Naive thymus-derived CD4-positive, alpha-beta T cell (primary cell): ENCODE measurements at regions of chr2 and their contacts with region 1.

Region 1: DNA sequence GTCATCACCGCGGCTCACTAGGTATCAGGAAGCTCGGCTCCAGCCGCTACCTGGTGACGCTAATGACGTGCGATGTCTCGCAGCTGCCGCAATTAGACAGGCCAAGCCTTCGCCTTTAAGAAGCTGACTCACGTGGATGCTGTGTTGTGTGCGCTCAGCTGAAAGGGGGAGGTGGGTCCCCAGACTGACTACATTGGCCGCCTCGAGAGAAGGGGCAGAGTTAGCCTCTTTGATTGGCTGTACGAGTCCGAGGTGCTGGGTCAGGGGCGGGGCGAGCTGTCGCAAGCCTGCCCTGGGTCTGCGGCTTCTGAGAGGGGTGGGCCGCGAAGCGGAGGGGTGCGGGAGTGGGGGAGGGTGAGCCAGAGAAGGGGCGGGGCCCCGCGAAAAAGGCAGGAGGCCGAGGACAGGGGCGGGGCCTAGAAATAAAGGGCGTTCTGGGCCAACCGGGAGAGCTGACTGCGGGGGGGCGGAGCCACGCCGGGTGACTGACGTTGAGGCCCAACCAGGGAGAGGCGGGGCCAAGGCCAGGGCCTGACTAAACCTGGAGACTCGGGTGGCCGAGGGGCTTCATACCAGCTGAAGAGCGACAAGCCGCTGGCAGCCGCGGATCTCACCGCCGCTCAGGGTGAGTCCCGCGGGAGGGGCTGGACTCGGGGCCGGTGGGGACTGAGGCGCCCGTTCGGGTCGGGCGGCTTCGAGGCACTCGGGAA is at the start of gene YPEL5:
- DNase-seq: peak; percentile 98 to 100 (median 100)
- ATAC-seq: peak; percentile 88
- H3K4me3 ChIP-seq: peak within 1 kb of the TSS; percentile 74
- H3K4me3 Mint-ChIP-seq: peak within 1 kb of the TSS; percentile 83 to 93 (median 88)
- H3K27ac ChIP-seq: peak within 1 kb of the TSS; percentile 100
- H3K27ac Mint-ChIP-seq: peak within 1 kb of the TSS; percentile 99 to 100 (median 99)
- H3K4me1 ChIP-seq: peaks cover 31 to 40% of the 10 kb centered on the region in 2 donors
- H3K4me1 Mint-ChIP-seq: peaks cover 38 to 75% (median 56%) of the 10 kb centered on the region in 7 donors
- H3K27me3 ChIP-seq: no peaks in the 10 kb centered on the region
- H3K27me3 Mint-ChIP-seq: no peaks in the 10 kb centered on the region
- total RNA-seq, gene YPEL5: 30.9 to 1,022 (median 98.3) TPM

Region 2: DNA sequence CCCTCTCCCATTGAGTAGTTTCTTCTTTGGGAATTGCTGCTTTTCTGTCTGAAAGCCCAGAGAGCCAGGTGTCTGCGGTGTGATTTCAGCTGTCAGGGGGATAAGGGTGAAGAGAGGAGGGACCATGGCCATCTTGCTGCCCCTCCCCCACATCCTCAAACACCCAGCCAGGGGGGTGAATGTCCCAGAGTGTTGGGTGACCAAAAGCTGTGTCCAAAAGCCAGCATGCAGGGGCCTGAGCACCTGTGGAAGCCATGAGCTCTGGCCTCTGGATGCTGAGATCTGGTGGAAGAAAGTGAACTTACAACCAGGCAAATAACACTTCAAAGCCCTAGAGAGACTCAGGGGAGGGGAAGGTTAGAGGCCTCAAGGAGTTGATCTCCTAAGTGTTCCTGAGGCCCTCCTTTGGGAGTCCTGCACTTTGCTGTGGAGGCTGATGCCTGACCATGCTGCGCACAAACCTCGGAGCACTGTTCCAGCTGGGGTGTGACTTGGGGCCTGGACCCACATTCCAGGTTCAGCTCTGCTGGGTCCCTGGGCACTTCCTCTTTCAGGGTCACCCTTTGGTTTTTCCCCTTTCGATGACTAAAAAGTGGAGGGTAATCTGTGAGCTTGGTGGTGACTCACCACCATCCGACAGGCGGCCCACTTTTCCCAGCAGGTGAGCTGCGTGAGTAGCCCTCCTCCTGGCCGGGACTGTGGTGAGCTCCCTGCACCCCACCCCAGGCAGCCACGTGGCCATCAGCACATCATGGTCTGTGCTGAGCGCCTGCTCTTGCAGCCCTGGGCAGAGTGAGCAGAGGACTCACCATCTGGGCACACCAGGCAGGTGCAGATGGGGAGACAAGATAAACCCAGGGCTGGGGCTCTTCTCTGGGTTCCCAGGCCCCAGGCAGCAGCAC is 1820.8 kb before region 1 on chr2:
- CTCF ChIA-PET with region 1: no interaction called
- POLR2A ChIA-PET with region 1: no interaction called
- intact Hi-C with region 1: no loop called
- DNase-seq: no peak
- ATAC-seq: peak; percentile 52
- H3K4me3 ChIP-seq: no peak overlapping the region
- H3K4me3 Mint-ChIP-seq: no peak overlapping the region
- H3K27ac ChIP-seq: no peak overlapping the region
- H3K27ac Mint-ChIP-seq: no peak overlapping the region
- H3K4me1 ChIP-seq: no peaks in the 10 kb centered on the region
- H3K4me1 Mint-ChIP-seq: peaks cover 0 to 8% (median 0%) of the 10 kb centered on the region in 7 donors
- H3K27me3 ChIP-seq: no peaks in the 10 kb centered on the region
- H3K27me3 Mint-ChIP-seq: no peaks in the 10 kb centered on the region

Region 3: GRCh38 chr2:28621172-28622100 is 1525.2 kb before region 1 on chr2:
- CTCF ChIA-PET with region 1: no interaction called
- POLR2A ChIA-PET with region 1: no interaction called
- intact Hi-C with region 1: loop called in 1 of 2 experiments (anchors 10 kb)
- DNase-seq: peak; percentile 44 to 96 (median 93)
- ATAC-seq: peak; percentile 94
- H3K4me3 ChIP-seq: peak overlapping the region; percentile 40
- H3K4me3 Mint-ChIP-seq: peak overlapping the region in 9 of 10 donors; percentile 71 to 86 (median 80)
- H3K27ac ChIP-seq: peak overlapping the region; percentile 95
- H3K27ac Mint-ChIP-seq: peak overlapping the region in 5 of 9 donors; percentile 93 to 100 (median 100)
- H3K4me1 ChIP-seq: peaks cover 43 to 86% of the 10 kb centered on the region in 2 donors
- H3K4me1 Mint-ChIP-seq: peaks cover 0 to 96% (median 59%) of the 10 kb centered on the region in 7 donors
- H3K27me3 ChIP-seq: no peaks in the 10 kb centered on the region
- H3K27me3 Mint-ChIP-seq: no peaks in the 10 kb centered on the region

Region 4: GRCh38 chr2:28944535-28945248 is 1201.9 kb before region 1 on chr2:
- CTCF ChIA-PET with region 1: no interaction called
- POLR2A ChIA-PET with region 1: no interaction called
- intact Hi-C with region 1: no loop called
- DNase-seq: no peak
- ATAC-seq: no peak
- H3K4me3 ChIP-seq: no peak overlapping the region
- H3K4me3 Mint-ChIP-seq: no peak overlapping the region
- H3K27ac ChIP-seq: no peak overlapping the region
- H3K27ac Mint-ChIP-seq: peak overlapping the region in 1 of 9 donors; percentile 70
- H3K4me1 ChIP-seq: no peaks in the 10 kb centered on the region
- H3K4me1 Mint-ChIP-seq: peaks cover 0 to 5% (median 0%) of the 10 kb centered on the region in 7 donors
- H3K27me3 ChIP-seq: no peaks in the 10 kb centered on the region
- H3K27me3 Mint-ChIP-seq: no peaks in the 10 kb centered on the region

Region 5: GRCh38 chr2:29014811-29015421 is 1131.7 kb before region 1 on chr2:
- CTCF ChIA-PET with region 1: no interaction called
- POLR2A ChIA-PET with region 1: no interaction called
- intact Hi-C with region 1: loop called (anchors 1 to 2 kb)
- DNase-seq: peak in 8 of 9 donors; percentile 33 to 75 (median 70)
- ATAC-seq: peak; percentile 75
- H3K4me3 ChIP-seq: peak overlapping the region; percentile 27
- H3K4me3 Mint-ChIP-seq: peak overlapping the region; percentile 74 to 94 (median 84)
- H3K27ac ChIP-seq: peak overlapping the region; percentile 77
- H3K27ac Mint-ChIP-seq: peak overlapping the region; percentile 94 to 100 (median 99)
- H3K4me1 ChIP-seq: peaks cover 72 to 83% of the 10 kb centered on the region in 2 donors
- H3K4me1 Mint-ChIP-seq: peaks cover 62 to 73% (median 72%) of the 10 kb centered on the region in 7 donors
- H3K27me3 ChIP-seq: no peaks in the 10 kb centered on the region
- H3K27me3 Mint-ChIP-seq: no peaks in the 10 kb centered on the region

Region 6: DNA sequence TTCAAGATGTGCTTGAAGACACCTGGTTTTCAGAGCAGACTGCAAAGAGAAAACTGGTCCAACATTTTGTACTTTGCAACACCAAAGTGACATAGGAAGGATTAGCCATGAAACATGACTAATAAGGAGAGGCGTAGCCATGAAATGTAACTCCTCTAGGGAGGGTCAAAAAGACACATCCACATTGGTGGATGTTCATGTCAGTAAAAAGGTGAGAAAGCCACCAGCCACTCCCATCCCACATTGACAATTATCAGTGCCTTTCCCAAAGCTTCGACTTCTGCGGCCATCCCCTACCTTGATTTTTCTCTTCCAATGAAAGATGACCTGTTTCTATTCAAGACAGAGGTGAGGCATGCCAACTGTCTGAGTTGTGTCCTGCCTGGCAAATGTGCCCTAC is 448.4 kb before region 1 on chr2:
- CTCF ChIA-PET with region 1: no interaction called
- POLR2A ChIA-PET with region 1: no interaction called
- intact Hi-C with region 1: no loop called
- DNase-seq: no peak
- ATAC-seq: no peak
- H3K4me3 ChIP-seq: no peak overlapping the region
- H3K4me3 Mint-ChIP-seq: no peak overlapping the region
- H3K27ac ChIP-seq: no peak overlapping the region
- H3K27ac Mint-ChIP-seq: no peak overlapping the region
- H3K4me1 ChIP-seq: no peaks in the 10 kb centered on the region
- H3K4me1 Mint-ChIP-seq: peaks cover 0 to 2% (median 0%) of the 10 kb centered on the region in 7 donors
- H3K27me3 ChIP-seq: no peaks in the 10 kb centered on the region
- H3K27me3 Mint-ChIP-seq: peaks cover 0 to 17% (median 9%) of the 10 kb centered on the region in 5 donors

Region 7: GRCh38 chr2:30208452-30208851 is 61.9 kb after region 1 on chr2:
- CTCF ChIA-PET with region 1: interaction called, 10 read pairs
- POLR2A ChIA-PET with region 1: interaction called, 10 read pairs
- intact Hi-C with region 1: no loop called
- DNase-seq: peak in 4 of 9 donors; percentile 19 to 42 (median 28)
- ATAC-seq: peak; percentile 69
- H3K4me3 ChIP-seq: peak overlapping the region; percentile 3
- H3K4me3 Mint-ChIP-seq: peak overlapping the region; percentile 14 to 80 (median 68)
- H3K27ac ChIP-seq: peak overlapping the region; percentile 25
- H3K27ac Mint-ChIP-seq: peak overlapping the region in 8 of 9 donors; percentile 82 to 95 (median 88)
- H3K4me1 ChIP-seq: peaks cover 8 to 33% of the 10 kb centered on the region in 2 donors
- H3K4me1 Mint-ChIP-seq: peaks cover 14 to 44% (median 35%) of the 10 kb centered on the region in 7 donors
- H3K27me3 ChIP-seq: no peaks in the 10 kb centered on the region
- H3K27me3 Mint-ChIP-seq: peaks cover 0 to 7% (median 0%) of the 10 kb centered on the region in 5 donors

Region 8: DNA sequence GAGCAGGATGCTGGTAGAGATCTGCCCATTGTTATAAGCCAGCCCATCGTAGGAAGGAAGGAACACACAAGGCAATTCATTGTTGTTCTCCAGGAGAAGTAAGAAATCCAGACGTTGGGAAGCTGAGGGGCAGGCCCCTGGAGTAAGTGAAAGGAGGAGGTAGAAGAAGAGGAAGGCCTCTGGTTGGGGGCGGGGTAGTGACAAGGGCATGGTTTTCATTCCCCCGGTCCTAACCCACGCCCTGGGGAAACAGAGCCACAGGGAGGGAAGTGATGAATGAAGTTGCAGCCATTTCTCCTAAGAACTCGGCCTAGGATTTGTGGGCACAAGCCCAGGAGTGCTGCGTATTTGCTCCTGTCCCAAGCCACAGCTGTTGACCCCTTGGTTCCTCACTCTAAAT is 102.8 kb after region 1 on chr2:
- CTCF ChIA-PET with region 1: no interaction called
- POLR2A ChIA-PET with region 1: no interaction called
- intact Hi-C with region 1: no loop called
- DNase-seq: no peak
- ATAC-seq: no peak
- H3K4me3 ChIP-seq: no peak overlapping the region
- H3K4me3 Mint-ChIP-seq: peak overlapping the region in 9 of 10 donors; percentile 29 to 77 (median 59)
- H3K27ac ChIP-seq: peak overlapping the region; percentile 56
- H3K27ac Mint-ChIP-seq: peak overlapping the region in 8 of 9 donors; percentile 83 to 100 (median 89)
- H3K4me1 ChIP-seq: peaks cover 70 to 88% of the 10 kb centered on the region in 2 donors
- H3K4me1 Mint-ChIP-seq: peaks cover 61 to 99% (median 96%) of the 10 kb centered on the region in 7 donors
- H3K27me3 ChIP-seq: no peaks in the 10 kb centered on the region
- H3K27me3 Mint-ChIP-seq: no peaks in the 10 kb centered on the region

Region 9: GRCh38 chr2:30266051-30266621 is 119.5 kb after region 1 on chr2:
- CTCF ChIA-PET with region 1: no interaction called
- POLR2A ChIA-PET with region 1: interaction called, 3 read pairs
- intact Hi-C with region 1: loop called in 1 of 2 experiments (anchors 2 kb)
- DNase-seq: peak; percentile 25 to 80 (median 75)
- ATAC-seq: peak; percentile 95
- H3K4me3 ChIP-seq: peak overlapping the region; percentile 44
- H3K4me3 Mint-ChIP-seq: peak overlapping the region; percentile 68 to 92 (median 84)
- H3K27ac ChIP-seq: peak overlapping the region; percentile 82
- H3K27ac Mint-ChIP-seq: peak overlapping the region; percentile 89 to 100 (median 97)
- H3K4me1 ChIP-seq: peaks cover 46 to 65% of the 10 kb centered on the region in 2 donors
- H3K4me1 Mint-ChIP-seq: peaks cover 44 to 94% (median 86%) of the 10 kb centered on the region in 7 donors
- H3K27me3 ChIP-seq: no peaks in the 10 kb centered on the region
- H3K27me3 Mint-ChIP-seq: no peaks in the 10 kb centered on the region

Region 10: DNA sequence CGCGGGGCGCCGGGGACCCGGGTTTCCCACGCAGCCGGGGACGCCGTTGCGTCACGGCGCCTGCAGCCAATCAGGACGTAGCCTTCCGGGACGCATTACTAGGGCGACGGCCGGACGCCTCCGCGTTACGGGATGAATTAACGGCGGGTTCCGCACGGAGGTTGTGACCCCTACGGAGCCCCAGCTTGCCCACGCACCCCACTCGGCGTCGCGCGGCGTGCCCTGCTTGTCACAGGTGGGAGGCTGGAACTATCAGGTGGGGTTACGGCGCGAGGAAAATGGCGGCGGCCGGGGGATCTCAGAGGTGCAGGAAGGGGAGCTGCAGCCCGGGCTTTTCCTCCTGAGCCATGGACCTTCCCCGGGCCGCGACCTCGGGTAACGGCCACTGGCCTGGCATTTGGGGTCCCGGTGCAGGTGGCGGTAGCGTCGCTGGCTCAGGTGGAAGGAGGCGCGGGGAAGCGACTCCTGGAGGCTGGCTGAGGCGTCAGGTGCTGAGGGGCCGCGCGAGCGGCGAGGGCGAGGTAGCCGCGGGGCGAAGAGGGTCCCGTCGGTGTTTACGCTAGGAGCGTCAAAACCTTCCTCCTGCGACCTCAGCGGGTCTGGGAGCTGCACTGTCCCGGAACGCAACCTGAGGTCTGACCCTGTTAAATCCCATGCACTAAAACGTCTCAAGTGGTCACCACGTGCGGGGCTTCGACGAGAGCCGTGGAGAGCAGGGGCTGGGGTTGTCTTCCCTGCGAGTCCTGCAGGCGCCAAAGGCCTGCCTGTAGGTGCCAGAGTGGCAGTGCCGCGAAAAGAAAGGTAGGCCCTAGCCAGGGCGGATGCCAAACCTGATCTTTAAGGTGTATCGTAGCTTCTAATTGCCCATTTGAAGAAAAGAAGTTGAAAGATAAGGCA is 300.8 kb after region 1 on chr2 and contains the start of gene LCLAT1:
- CTCF ChIA-PET with region 1: no interaction called
- POLR2A ChIA-PET with region 1: interaction called, 4 read pairs
- intact Hi-C with region 1: loop called (anchors 1 to 2 kb)
- DNase-seq: peak; percentile 72 to 91 (median 86)
- ATAC-seq: peak; percentile 89
- H3K4me3 ChIP-seq: peak within 1 kb of the TSS; percentile 89
- H3K4me3 Mint-ChIP-seq: peak within 1 kb of the TSS; percentile 86 to 97 (median 95)
- H3K27ac ChIP-seq: peak within 1 kb of the TSS; percentile 91
- H3K27ac Mint-ChIP-seq: peak within 1 kb of the TSS; percentile 92 to 99 (median 97)
- H3K4me1 ChIP-seq: peaks cover 10 to 18% of the 10 kb centered on the region in 2 donors
- H3K4me1 Mint-ChIP-seq: peaks cover 23 to 56% (median 48%) of the 10 kb centered on the region in 7 donors
- H3K27me3 ChIP-seq: no peaks in the 10 kb centered on the region
- H3K27me3 Mint-ChIP-seq: no peaks in the 10 kb centered on the region
- total RNA-seq, gene LCLAT1: 18.2 to 25.2 (median 22.2) TPM

Region 11: GRCh38 chr2:32010670-32011484 is 1864.3 kb after region 1 on chr2 and contains the start of gene MEMO1:
- CTCF ChIA-PET with region 1: no interaction called
- POLR2A ChIA-PET with region 1: no interaction called
- intact Hi-C with region 1: loop called in 1 of 2 experiments (anchors 2 kb)
- DNase-seq: peak; percentile 82 to 96 (median 94)
- ATAC-seq: peak; percentile 88
- H3K4me3 ChIP-seq: peak within 1 kb of the TSS; percentile 76
- H3K4me3 Mint-ChIP-seq: peak within 1 kb of the TSS; percentile 77 to 95 (median 92)
- H3K27ac ChIP-seq: peak within 1 kb of the TSS; percentile 80
- H3K27ac Mint-ChIP-seq: peak within 1 kb of the TSS; percentile 86 to 96 (median 93)
- H3K4me1 ChIP-seq: peaks cover 28% of the 10 kb centered on the region in 2 donors
- H3K4me1 Mint-ChIP-seq: peaks cover 26 to 55% (median 43%) of the 10 kb centered on the region in 7 donors
- H3K27me3 ChIP-seq: no peaks in the 10 kb centered on the region
- H3K27me3 Mint-ChIP-seq: peaks cover 0 to 3% (median 0%) of the 10 kb centered on the region in 5 donors
- total RNA-seq, gene MEMO1: 44.5 to 49.2 (median 47.9) TPM